CD4-positive, alpha-beta T cell (primary cell): ENCODE measurements at regions of chr3 and their contacts with region 1.

Region 1: GRCh38 chr3:141266797-141267555 is 35.4 kb downstream of the PXYLP1 start:
- DNase-seq: peak in 13 of 14 experiments; percentile 7 to 71 (median 51)
- ATAC-seq: peak; percentile 81
- H3K4me3 ChIP-seq: peak overlapping the region; percentile 64
- H3K4me3 Mint-ChIP-seq: peak overlapping the region; percentile 90
- H3K27ac ChIP-seq: peak overlapping the region; percentile 72 to 84
- H3K27ac Mint-ChIP-seq: peak overlapping the region; percentile 96
- H3K4me1 ChIP-seq: peaks cover 35% of the 10 kb centered on the region
- H3K4me1 Mint-ChIP-seq: peaks cover 49% of the 10 kb centered on the region
- H3K27me3 ChIP-seq: no peaks in the 10 kb centered on the region
- H3K27me3 Mint-ChIP-seq: no peaks in the 10 kb centered on the region
- CTCF ChIP-seq: no peak

Region 2: DNA sequence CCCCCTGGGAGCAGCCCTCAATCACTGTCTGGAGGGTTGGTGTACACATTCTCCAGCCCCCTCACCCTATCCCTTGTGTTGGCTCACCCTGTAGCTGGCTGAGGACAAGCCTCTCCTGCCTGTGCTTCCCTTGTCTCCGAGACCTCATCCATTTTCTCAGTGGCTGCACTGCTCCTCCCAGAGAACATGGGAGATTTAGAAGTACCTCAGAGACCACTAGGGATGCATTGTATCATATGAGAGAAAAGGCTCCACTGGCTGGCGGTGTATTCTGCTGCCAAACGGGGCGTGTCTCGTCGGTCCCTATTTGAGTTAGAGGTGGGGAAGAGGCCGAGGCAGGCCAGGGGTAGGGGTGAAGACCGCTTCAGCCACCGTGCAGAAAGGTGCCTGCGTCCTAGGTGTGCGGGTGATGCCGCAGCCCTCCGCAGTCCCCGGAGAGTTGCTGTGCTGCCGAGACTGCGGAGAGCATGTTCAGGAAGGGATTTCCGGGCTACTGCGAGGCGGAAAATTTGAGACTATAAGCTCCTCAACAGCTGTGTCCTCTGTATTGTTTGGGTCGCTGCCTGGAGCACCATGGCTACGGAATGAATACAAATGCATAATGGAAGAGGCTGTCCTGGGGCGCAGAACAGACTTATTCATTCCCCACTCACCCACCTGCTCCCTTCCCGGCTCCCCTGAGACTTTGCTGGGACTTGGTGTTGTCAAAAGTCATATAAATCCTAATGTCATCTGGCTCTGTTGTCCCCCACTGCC is 172.0 kb before region 1 on chr3:
- CTCF ChIA-PET with region 1: no interaction called
- POLR2A ChIA-PET with region 1: no interaction called
- intact Hi-C with region 1: no loop called
- DNase-seq: peak in 1 of 14 experiments; percentile 15
- ATAC-seq: no peak
- H3K4me3 ChIP-seq: no peak overlapping the region
- H3K4me3 Mint-ChIP-seq: no peak overlapping the region
- H3K27ac ChIP-seq: no peak overlapping the region
- H3K27ac Mint-ChIP-seq: no peak overlapping the region
- H3K4me1 ChIP-seq: no peaks in the 10 kb centered on the region
- H3K4me1 Mint-ChIP-seq: no peaks in the 10 kb centered on the region
- H3K27me3 ChIP-seq: no peaks in the 10 kb centered on the region
- H3K27me3 Mint-ChIP-seq: no peaks in the 10 kb centered on the region
- CTCF ChIP-seq: no peak

Region 3: DNA sequence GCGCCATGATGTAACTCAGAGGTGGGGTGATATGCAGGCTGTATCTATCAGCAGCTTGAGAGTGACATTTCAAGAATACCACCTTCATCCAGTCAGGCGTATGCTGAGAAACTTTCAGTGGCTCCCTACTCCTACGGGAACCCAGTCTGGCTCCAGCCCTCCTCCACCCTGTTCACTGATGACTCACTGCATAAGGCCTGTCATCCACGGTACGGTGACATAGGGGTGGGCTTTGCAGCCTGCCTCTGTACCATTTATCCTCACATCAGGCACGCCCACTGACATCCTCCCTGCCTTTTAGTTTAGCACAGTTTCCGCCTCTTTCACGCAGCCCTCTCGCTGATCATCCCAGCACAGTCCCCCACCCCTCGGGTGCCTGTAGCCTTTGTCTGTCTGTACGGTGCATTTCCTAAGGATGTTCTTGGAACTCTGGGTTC is 23.7 kb before region 1 on chr3:
- CTCF ChIA-PET with region 1: no interaction called
- POLR2A ChIA-PET with region 1: interaction called, 320 read pairs
- intact Hi-C with region 1: no loop called
- DNase-seq: peak in 13 of 14 experiments; percentile 24 to 81 (median 63)
- ATAC-seq: peak; percentile 95
- H3K4me3 ChIP-seq: no peak overlapping the region
- H3K4me3 Mint-ChIP-seq: peak overlapping the region; percentile 74
- H3K27ac ChIP-seq: peak overlapping the region in 1 of 2 donors; percentile 51
- H3K27ac Mint-ChIP-seq: peak overlapping the region; percentile 91
- H3K4me1 ChIP-seq: peaks cover 34% of the 10 kb centered on the region
- H3K4me1 Mint-ChIP-seq: peaks cover 60% of the 10 kb centered on the region
- H3K27me3 ChIP-seq: no peaks in the 10 kb centered on the region
- H3K27me3 Mint-ChIP-seq: no peaks in the 10 kb centered on the region
- CTCF ChIP-seq: no peak

Region 4: DNA sequence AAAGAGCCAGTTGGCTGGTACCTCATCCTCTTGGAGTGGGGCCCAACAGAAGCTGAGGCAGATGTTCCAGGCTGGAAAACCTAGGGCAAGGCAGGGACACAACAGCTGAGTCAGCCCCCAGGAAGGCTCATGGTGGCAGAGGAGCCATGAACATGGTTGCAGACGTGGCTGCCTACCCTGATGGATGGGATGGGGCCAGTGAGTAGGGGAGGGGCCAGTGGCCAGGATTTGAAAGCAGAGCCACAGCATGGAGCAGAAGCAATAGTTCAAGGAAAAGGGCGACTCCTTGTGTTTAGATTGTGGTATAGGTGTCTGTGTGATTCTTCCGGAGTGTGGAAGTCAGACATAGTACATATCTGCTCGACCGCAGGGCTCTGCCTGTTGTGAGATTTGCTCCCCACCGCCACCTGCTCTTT is 11.1 kb before region 1 on chr3:
- CTCF ChIA-PET with region 1: interaction called, 4 read pairs
- POLR2A ChIA-PET with region 1: interaction called, 42 read pairs
- intact Hi-C with region 1: no loop called
- DNase-seq: peak in 9 of 14 experiments; percentile 15 to 83 (median 52)
- ATAC-seq: peak; percentile 97
- H3K4me3 ChIP-seq: no peak overlapping the region
- H3K4me3 Mint-ChIP-seq: no peak overlapping the region
- H3K27ac ChIP-seq: no peak overlapping the region
- H3K27ac Mint-ChIP-seq: peak overlapping the region; percentile 69
- H3K4me1 ChIP-seq: peaks cover 15% of the 10 kb centered on the region
- H3K4me1 Mint-ChIP-seq: peaks cover 56% of the 10 kb centered on the region
- H3K27me3 ChIP-seq: no peaks in the 10 kb centered on the region
- H3K27me3 Mint-ChIP-seq: no peaks in the 10 kb centered on the region
- CTCF ChIP-seq: peak; percentile 64

Region 5: DNA sequence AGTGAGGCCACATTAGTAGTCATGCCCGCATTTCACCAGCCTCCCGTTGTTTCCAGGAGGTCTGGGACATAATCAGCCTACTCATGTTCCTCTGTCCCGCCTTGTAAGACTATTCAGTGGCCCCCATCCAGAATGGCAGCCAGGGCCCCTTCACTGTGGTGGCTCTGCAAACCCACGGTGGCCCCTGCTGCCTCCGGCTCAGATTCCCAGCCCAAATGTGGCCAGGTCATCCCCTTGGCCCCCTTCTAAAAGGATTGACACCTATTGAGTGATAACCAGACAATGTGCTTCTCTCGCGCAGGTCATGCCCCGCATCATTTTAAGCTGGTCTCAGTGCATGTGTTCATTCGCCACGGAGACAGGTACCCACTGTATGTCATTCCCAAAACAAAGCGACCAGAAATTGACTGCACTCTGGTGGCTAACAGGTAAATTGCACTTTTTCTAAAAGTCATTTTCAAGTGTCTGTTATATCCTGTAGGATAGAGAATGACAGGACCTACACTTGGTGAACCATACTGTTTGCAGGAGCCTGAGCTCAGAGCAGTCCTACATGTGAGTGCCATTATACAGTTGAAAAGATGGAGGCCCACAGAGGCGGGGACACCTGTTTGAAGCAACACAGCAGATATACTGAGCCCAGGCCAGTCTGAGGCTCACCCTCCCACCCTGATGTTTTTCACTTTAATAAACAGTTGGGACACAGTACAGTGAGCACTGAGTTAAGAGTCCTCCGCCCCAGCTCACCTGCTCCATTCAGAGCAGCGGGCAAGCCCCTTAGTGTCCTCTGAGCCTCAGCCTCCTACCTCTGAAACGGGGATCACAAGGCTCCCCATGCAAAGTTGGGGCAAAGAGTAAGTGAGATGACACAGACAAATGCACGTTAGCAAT is 12.3 kb after region 1 on chr3:
- CTCF ChIA-PET with region 1: interaction called, 4 read pairs
- POLR2A ChIA-PET with region 1: interaction called, 19 read pairs
- intact Hi-C with region 1: no loop called
- DNase-seq: peak in 4 of 14 experiments; percentile 38 to 61 (median 58)
- ATAC-seq: peak; percentile 87
- H3K4me3 ChIP-seq: no peak overlapping the region
- H3K4me3 Mint-ChIP-seq: no peak overlapping the region
- H3K27ac ChIP-seq: no peak overlapping the region
- H3K27ac Mint-ChIP-seq: no peak overlapping the region
- H3K4me1 ChIP-seq: peaks cover 20% of the 10 kb centered on the region
- H3K4me1 Mint-ChIP-seq: peaks cover 28% of the 10 kb centered on the region
- H3K27me3 ChIP-seq: no peaks in the 10 kb centered on the region
- H3K27me3 Mint-ChIP-seq: no peaks in the 10 kb centered on the region
- CTCF ChIP-seq: peak; percentile 77

Region 6: DNA sequence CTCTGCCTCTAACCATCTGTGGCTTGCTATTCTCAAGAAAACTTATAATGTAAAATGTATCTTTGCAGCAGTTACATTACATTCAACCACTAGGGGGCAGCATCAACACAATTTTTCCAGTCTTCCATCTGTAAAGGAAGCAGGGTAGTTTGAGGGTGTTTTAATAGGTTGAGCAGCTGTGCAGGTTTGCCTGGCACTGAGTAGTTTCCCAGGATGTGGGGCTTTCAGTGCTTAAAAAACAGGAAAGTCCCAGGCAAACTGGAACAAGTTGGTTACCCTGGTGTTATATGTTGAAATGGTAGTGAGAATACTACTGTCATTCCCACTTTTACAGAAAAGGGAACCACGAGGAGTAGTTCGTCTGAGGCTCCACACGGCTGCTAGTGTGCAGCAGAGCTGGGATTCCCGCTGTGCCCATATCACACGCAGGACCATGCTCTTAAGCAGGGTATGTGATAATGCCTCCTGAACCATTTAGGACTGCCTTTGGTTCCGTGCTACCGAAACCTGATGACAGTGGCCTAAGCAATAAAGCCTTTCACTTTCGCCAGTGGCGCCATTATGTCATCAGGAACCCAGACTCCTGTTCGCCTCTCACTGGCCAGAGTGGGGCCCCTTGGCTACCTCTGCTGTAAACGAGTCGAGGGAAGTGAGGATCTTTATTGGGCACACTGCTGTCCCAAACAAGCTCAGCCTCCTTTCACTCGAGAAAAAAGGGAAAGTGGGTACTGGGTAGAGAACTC is 36.7 kb after region 1 on chr3:
- CTCF ChIA-PET with region 1: no interaction called
- POLR2A ChIA-PET with region 1: interaction called, 34 read pairs
- intact Hi-C with region 1: no loop called
- DNase-seq: peak in 11 of 14 experiments; percentile 16 to 89 (median 60)
- ATAC-seq: peak; percentile 43
- H3K4me3 ChIP-seq: no peak overlapping the region
- H3K4me3 Mint-ChIP-seq: no peak overlapping the region
- H3K27ac ChIP-seq: no peak overlapping the region
- H3K27ac Mint-ChIP-seq: no peak overlapping the region
- H3K4me1 ChIP-seq: peaks cover 61% of the 10 kb centered on the region
- H3K4me1 Mint-ChIP-seq: peaks cover 81% of the 10 kb centered on the region
- H3K27me3 ChIP-seq: no peaks in the 10 kb centered on the region
- H3K27me3 Mint-ChIP-seq: no peaks in the 10 kb centered on the region
- CTCF ChIP-seq: peak; percentile 80

Region 7: DNA sequence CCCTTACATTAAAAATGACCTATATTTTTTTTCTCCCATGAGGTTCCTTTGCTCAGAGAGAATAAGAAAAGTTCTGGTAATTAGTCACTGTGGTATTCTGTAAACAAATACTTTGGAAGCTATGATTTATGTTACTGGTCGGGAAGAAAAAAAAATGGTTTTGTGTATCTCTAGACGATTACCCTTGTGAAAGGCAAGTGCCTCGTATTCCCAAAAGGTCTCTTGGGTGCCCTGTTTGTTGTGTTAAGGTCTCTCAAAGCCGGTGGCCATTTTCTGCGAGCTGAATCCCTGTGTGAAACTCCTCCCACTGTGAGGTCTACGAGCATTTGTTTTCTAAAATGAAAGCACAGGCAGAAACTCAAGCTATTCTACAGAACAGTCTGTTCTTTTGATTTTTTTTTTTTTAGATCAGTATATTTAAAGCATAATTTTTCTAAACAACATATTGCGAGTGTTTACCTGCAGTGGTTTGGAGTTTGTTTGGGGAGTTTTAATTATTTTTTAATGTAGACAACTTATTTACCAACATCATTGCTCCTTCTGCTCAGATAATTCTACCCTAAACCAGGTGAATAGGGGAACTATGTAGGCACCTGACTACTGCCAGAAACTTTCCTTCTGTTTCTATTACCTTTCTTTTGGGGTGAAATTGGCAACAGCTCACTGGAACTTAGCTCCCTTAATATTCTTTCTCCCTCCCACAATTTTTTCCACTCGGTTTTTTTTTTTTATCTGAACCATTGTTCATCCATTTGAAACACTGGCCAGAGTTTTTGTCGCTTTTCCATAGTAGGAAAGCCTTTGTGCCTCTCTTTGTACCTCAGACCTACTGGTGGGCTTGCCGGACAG is 145.3 kb after region 1 on chr3:
- CTCF ChIA-PET with region 1: no interaction called
- POLR2A ChIA-PET with region 1: interaction called, 10 read pairs
- intact Hi-C with region 1: no loop called
- DNase-seq: peak; percentile 33 to 87 (median 48)
- ATAC-seq: peak; percentile 69
- H3K4me3 ChIP-seq: peak overlapping the region; percentile 31
- H3K4me3 Mint-ChIP-seq: peak overlapping the region; percentile 82
- H3K27ac ChIP-seq: peak overlapping the region; percentile 65 to 87
- H3K27ac Mint-ChIP-seq: peak overlapping the region; percentile 98
- H3K4me1 ChIP-seq: peaks cover 67% of the 10 kb centered on the region
- H3K4me1 Mint-ChIP-seq: peaks cover 80% of the 10 kb centered on the region
- H3K27me3 ChIP-seq: no peaks in the 10 kb centered on the region
- H3K27me3 Mint-ChIP-seq: no peaks in the 10 kb centered on the region
- CTCF ChIP-seq: no peak